ENCODE measurements at regions of chr15 and their contacts with region 1.

Region 1: GRCh38 chr15:64825431-64826294 is at the start of gene PIF1:
- DNase-seq: peak; percentile 95
- CTCF ChIP-seq: no peak

Region 2: DNA sequence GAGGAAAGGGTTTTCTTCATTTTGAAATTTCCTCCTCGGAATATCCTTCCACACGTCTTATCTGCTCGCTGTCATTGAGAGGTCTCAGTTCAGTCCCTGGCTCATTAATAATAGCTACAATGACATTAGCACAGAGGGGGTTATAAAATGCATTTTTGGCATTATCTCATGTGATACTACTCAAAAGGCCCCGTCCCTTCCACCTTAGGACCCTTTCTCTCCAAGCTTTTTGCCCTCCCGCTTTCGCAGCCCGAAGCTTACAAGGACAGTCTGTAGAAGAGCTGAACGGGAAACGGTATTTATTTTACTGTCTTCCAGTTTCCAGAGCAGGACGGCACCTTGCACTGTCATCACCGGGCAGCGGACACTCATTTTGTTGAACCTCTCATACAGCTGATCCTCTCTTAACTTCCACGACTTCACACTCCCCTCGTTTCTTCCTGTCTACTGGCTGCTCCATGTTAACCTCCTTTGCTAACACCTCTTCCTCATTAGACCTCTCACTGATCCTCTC is 10.4 kb after region 1 on chr15:
- CTCF ChIA-PET with region 1: interaction called, 19 read pairs
- POLR2A ChIA-PET with region 1: interaction called, 4 read pairs
- DNase-seq: no peak
- CTCF ChIP-seq: no peak

Region 3: DNA sequence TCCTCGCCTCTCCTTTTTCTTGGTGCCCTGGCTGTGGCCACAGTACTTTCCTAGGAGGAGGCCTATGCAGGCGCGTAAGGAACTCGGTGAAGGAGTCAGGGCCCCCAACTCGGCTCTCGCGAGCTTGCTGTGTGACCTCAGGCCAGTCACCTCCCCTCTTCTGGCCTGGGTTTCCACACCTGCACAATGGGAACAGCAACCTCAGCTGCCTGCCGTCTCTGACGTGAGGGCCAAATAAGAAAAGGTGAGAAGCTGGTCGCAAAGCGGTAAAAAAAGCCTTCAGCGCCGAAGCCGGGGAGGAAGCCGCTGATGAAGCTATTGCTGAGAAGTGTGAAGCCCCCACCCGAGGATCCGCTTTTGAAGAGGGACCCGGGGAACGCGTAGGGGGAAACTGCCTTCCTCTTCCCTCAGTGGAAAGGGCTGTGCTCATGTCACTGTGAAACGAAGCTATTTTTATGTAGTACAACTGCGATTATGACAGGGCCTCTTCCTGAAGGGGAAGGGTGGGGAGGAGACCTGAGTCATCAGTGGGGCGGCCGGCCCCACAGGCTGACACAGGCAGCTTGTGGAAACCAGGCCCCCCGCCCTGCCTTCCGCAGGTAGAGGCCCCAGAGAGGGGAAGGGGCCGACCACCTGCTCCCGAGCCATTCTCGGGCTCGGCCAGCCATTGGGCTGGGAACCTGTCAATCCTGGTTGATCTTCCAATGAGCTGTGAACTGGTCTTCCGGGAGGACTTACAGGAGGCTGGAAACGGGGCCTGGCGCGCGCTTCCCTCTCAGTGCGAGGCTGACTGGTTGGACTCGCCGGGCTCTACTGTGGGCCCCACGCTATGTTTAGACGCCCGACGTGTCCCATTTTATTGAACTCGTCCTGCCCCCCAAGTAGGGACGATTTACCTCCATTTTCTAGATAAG is 68.1 kb after region 1 on chr15:
- CTCF ChIA-PET with region 1: interaction called, 4 read pairs
- POLR2A ChIA-PET with region 1: interaction called, 11 read pairs
- DNase-seq: peak; percentile 94
- CTCF ChIP-seq: no peak